B cell (primary cell): ENCODE measurements at regions of chr6 and their contacts with region 1.

Region 1: DNA sequence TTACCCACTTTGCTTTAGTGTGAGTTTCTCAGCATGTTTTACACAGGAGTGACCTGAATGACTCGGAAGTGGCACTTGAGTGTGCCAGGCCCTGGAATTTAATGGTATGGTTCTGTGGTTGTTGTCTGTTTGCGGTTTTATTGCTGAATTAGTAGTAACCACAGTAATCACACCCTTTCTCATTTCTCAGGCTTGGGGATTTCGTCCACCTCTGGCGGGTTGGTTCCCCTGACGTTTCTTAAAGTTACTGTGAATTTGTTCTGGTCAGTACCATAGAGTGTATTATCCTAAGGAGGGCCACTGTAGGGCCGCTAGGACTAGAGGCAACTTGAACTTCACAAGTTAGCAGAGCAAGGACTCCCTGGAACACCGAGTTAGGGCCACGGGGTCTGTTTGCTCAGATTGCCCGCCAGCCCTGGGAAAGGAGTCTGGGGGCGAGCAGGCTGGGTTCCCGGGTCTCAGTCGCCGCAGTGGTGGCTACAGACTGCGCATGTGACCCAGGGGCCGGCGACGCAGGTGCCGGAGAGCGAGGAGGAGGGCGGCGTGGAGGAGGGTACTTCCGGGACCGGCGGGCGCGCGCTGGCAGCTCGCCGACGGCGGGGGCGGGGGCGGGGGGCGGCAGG is 546 bp upstream of the KLHL32 start:
- DNase-seq: no peak
- ATAC-seq: no peak
- H3K4me3 ChIP-seq: peak overlapping the region in 4 of 5 experiments; percentile 51 to 76 (median 70)
- H3K4me3 Mint-ChIP-seq: peak overlapping the region; percentile 96
- H3K27ac ChIP-seq: peak overlapping the region; percentile 93 to 98
- H3K27ac Mint-ChIP-seq: peak overlapping the region; percentile 97
- H3K4me1 ChIP-seq: peaks cover 11 to 16% of the 10 kb centered on the region in 2 donors
- H3K4me1 Mint-ChIP-seq: peaks cover 24% of the 10 kb centered on the region
- H3K27me3 ChIP-seq: no peaks in the 10 kb centered on the region
- H3K27me3 Mint-ChIP-seq: peaks cover 2% of the 10 kb centered on the region
- CTCF ChIP-seq: no peak

Region 2: GRCh38 chr6:95577304-95578105 is 1346.5 kb before region 1 on chr6 and contains the start of gene MANEA:
- CTCF ChIA-PET with region 1: no interaction called
- POLR2A ChIA-PET with region 1: no interaction called
- intact Hi-C with region 1: loop called (anchors 1 kb)
- DNase-seq: peak; percentile 89
- ATAC-seq: peak; percentile 87
- H3K4me3 ChIP-seq: peak within 1 kb of the TSS; percentile 75 to 99 (median 91)
- H3K4me3 Mint-ChIP-seq: peak within 1 kb of the TSS; percentile 99
- H3K27ac ChIP-seq: peak within 1 kb of the TSS; percentile 86 to 91
- H3K27ac Mint-ChIP-seq: peak within 1 kb of the TSS; percentile 99
- H3K4me1 ChIP-seq: peaks cover 12 to 15% of the 10 kb centered on the region in 2 donors
- H3K4me1 Mint-ChIP-seq: peaks cover 39% of the 10 kb centered on the region
- H3K27me3 ChIP-seq: no peaks in the 10 kb centered on the region
- H3K27me3 Mint-ChIP-seq: no peaks in the 10 kb centered on the region
- CTCF ChIP-seq: no peak
- total RNA-seq, gene MANEA: 8.7 and 9.0 TPM in 2 replicates

Region 3: GRCh38 chr6:96521644-96522464 is 402.1 kb before region 1 on chr6 and contains the start of gene UFL1:
- CTCF ChIA-PET with region 1: no interaction called
- POLR2A ChIA-PET with region 1: interaction called, 8 read pairs
- intact Hi-C with region 1: loop called (anchors 1 kb)
- DNase-seq: peak; percentile 96
- ATAC-seq: peak; percentile 94
- H3K4me3 ChIP-seq: peak within 1 kb of the TSS; percentile 86 to 96 (median 93)
- H3K4me3 Mint-ChIP-seq: peak within 1 kb of the TSS; percentile 100
- H3K27ac ChIP-seq: peak within 1 kb of the TSS; percentile 98 to 100
- H3K27ac Mint-ChIP-seq: peak within 1 kb of the TSS; percentile 100
- H3K4me1 ChIP-seq: peaks cover 17 to 19% of the 10 kb centered on the region in 2 donors
- H3K4me1 Mint-ChIP-seq: peaks cover 25% of the 10 kb centered on the region
- H3K27me3 ChIP-seq: no peaks in the 10 kb centered on the region
- H3K27me3 Mint-ChIP-seq: no peaks in the 10 kb centered on the region
- CTCF ChIP-seq: peak; percentile 26
- total RNA-seq, gene UFL1: 24.6 and 25.0 TPM in 2 replicates

Region 4: GRCh38 chr6:96837081-96837971 is 86.7 kb before region 1 on chr6 and contains the start of gene GPR63:
- CTCF ChIA-PET with region 1: no interaction called
- POLR2A ChIA-PET with region 1: no interaction called
- intact Hi-C with region 1: loop called (anchors 1 kb)
- DNase-seq: peak; percentile 58
- ATAC-seq: peak; percentile 75
- H3K4me3 ChIP-seq: peak within 1 kb of the TSS; percentile 34 to 71 (median 57)
- H3K4me3 Mint-ChIP-seq: peak within 1 kb of the TSS; percentile 91
- H3K27ac ChIP-seq: no peak within 1 kb of the TSS
- H3K27ac Mint-ChIP-seq: no peak within 1 kb of the TSS
- H3K4me1 ChIP-seq: peaks cover 13 to 14% of the 10 kb centered on the region in 2 donors
- H3K4me1 Mint-ChIP-seq: peaks cover 14% of the 10 kb centered on the region
- H3K27me3 ChIP-seq: peaks cover 0 to 28% (median 14%) of the 10 kb centered on the region in 4 experiments
- H3K27me3 Mint-ChIP-seq: peaks cover 52% of the 10 kb centered on the region
- CTCF ChIP-seq: no peak
- total RNA-seq, gene GPR63: 0.10 and 0.12 TPM in 2 replicates

Region 5: DNA sequence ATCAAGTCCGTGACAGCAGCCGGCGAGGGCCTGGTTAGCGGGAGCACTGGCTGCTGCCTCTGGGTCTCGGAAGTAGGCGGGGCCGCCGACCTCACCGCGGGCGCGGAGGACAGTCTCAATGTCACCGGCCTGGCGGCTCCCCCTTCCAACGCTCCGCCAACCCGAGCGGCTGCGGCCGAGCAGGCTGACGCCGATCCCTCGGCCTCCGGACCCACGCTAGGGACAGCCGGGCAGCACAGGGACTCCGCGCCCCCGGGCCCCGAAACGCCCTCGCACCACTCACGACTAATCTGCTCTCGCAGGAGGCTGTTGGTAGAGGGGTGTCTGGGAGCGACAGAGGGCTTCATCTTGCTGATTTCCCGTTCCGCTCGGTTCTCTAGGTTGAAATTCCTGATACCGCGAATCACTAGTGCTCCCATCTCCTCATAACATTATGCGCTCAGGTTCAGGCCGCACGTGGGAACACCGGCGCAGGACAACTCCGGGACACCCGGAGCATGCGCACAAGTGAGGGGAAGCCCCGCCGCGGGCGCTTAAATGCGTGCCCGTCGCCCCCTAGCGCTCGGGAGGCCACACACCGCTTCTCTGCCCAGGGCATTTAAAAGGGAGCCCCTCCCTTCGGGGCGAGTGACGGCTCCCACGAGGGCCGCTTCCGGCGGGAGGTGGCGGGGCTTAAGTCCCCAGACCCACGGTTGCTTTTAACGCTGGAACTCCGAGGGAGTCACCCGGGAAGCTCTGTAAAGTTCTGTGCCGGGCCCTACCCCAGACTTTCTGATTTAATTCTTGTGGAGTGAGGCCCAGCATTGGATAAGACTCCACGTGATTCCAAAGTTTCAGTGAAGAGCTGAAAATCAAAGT is 26.4 kb before region 1 on chr6 and contains the start of gene NDUFAF4:
- CTCF ChIA-PET with region 1: interaction called, 26 read pairs
- POLR2A ChIA-PET with region 1: interaction called, 5 read pairs
- intact Hi-C with region 1: loop called (anchors 1 kb)
- DNase-seq: peak; percentile 96
- ATAC-seq: peak; percentile 95
- H3K4me3 ChIP-seq: peak within 1 kb of the TSS; percentile 89 to 96 (median 92)
- H3K4me3 Mint-ChIP-seq: peak within 1 kb of the TSS; percentile 99
- H3K27ac ChIP-seq: peak within 1 kb of the TSS; percentile 83 to 93
- H3K27ac Mint-ChIP-seq: peak within 1 kb of the TSS; percentile 97
- H3K4me1 ChIP-seq: peaks cover 16 to 22% of the 10 kb centered on the region in 2 donors
- H3K4me1 Mint-ChIP-seq: peaks cover 27% of the 10 kb centered on the region
- H3K27me3 ChIP-seq: no peaks in the 10 kb centered on the region
- H3K27me3 Mint-ChIP-seq: peaks cover 11% of the 10 kb centered on the region
- CTCF ChIP-seq: peak; percentile 92
- total RNA-seq, gene NDUFAF4: 16.3 TPM in 2 replicates

Region 6: GRCh38 chr6:97053643-97054411 is 129.8 kb after region 1 on chr6:
- CTCF ChIA-PET with region 1: no interaction called
- POLR2A ChIA-PET with region 1: no interaction called
- intact Hi-C with region 1: loop called (anchors 2 kb)
- DNase-seq: no peak
- ATAC-seq: no peak
- H3K4me3 ChIP-seq: no peak overlapping the region
- H3K4me3 Mint-ChIP-seq: no peak overlapping the region
- H3K27ac ChIP-seq: no peak overlapping the region
- H3K27ac Mint-ChIP-seq: no peak overlapping the region
- H3K4me1 ChIP-seq: peaks cover 17% of the 10 kb centered on the region in 2 donors
- H3K4me1 Mint-ChIP-seq: peaks cover 25% of the 10 kb centered on the region
- H3K27me3 ChIP-seq: no peaks in the 10 kb centered on the region
- H3K27me3 Mint-ChIP-seq: peaks cover 1% of the 10 kb centered on the region
- CTCF ChIP-seq: peak; percentile 53

Region 7: DNA sequence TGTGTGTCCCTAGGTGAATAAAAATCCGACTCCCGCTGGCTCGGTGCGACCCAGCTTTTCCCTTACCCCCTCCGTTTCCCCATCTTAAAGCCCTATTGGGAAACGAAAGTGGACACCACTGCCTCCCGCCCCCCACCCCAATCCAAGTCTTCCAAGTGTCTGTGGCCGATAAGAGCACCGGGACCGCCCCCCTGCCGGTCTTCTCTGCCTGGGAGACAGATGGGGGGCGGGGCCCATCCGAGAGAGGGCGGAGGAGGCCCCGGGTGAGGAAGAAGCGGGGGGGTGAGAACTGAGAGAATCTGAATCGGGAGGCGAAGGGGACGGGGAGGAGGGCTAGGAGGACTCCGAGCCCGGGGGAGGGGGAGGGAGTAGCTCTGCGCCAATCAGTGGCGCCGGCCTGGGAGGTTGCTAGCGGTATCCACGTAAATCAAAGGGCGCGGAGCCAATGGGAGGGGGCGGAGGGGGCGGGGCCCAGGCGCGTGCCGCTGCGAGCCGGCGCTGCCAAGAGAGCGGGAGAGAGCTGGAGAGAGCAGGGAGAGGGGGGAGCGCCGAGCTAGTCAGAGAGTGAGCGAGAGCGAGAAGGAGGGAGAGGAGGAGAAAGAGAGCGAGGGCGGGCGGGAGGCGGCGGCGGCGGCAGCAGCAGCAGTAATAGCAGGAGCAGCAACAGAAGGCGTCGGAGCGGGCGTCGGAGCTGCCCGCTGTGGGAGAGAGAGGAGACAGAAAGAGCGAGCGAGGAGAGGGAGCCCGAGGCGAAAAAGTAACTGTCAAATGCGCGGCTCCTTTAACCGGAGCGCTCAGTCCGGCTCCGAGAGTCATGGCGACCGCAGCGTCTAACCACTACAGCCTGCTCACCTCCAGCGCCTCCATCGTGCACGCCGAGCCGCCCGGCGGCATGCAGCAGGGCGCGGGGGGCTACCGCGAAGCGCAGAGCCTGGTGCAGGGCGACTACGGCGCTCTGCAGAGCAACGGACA is 1910.4 kb after region 1 on chr6 and contains the start of gene POU3F2:
- CTCF ChIA-PET with region 1: no interaction called
- POLR2A ChIA-PET with region 1: no interaction called
- intact Hi-C with region 1: loop called (anchors 10 kb)
- DNase-seq: peak; percentile 79
- ATAC-seq: peak; percentile 86
- H3K4me3 ChIP-seq: peak within 1 kb of the TSS; percentile 48 to 82 (median 59)
- H3K4me3 Mint-ChIP-seq: peak within 1 kb of the TSS; percentile 92
- H3K27ac ChIP-seq: no peak within 1 kb of the TSS
- H3K27ac Mint-ChIP-seq: peak within 1 kb of the TSS; percentile 63
- H3K4me1 ChIP-seq: peaks cover 49 to 60% of the 10 kb centered on the region in 2 donors
- H3K4me1 Mint-ChIP-seq: peaks cover 45% of the 10 kb centered on the region
- H3K27me3 ChIP-seq: peaks cover 0 to 81% (median 69%) of the 10 kb centered on the region in 4 experiments
- H3K27me3 Mint-ChIP-seq: peaks cover 77% of the 10 kb centered on the region
- CTCF ChIP-seq: no peak
- total RNA-seq, gene POU3F2: not detected in 2 replicates